ENCODE measurements at regions of chr1 and their contacts with region 1.

Region 1: DNA sequence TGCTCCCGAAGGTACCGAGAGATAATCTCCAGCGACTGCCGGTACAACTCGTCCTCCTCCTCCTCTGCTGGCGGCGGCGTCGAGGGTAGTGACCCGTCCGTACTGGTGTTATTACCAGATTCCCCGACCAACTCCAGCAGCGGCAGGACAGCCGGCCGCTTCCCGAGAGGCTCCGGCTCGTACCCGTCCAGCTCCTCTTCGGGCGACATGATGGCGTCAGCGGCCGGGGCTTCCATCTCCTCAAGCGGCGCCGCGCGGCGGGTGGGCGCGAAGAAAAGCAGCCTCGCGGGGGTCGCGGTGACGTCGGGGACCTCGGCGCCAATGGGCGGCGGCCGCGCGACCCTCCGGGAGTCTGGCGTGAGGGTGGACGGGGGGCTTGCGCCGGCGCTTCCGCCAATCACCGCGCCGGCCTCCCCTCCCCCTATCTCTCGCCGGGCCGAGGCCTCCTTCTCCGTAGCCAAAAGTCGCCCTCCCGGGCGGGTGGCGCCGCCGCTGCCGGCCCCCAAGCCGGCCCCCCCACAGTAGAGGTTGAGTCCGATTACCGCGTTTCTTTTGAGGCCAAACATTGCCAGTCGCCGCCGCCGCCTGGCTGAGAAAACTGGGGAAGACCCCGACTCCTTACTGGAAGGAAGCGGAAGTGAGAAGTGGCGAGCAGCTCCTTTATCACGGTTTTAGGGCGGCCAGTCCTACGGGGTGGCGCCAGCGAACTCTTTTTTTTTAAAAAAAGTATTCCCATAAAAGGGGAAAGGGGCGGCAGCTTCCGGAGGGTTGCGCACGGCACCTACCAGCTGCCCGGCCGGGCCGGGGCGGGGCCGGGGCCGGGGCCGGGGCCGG is at the start of gene MCL1:
- DNase-seq: peak; percentile 95
- H3K4me3 Mint-ChIP-seq: peak within 1 kb of the TSS; percentile 90
- H3K27ac Mint-ChIP-seq: peak within 1 kb of the TSS; percentile 99
- H3K4me1 Mint-ChIP-seq: peaks cover 19% of the 10 kb centered on the region
- H3K27me3 Mint-ChIP-seq: no peaks in the 10 kb centered on the region
- total RNA-seq, gene MCL1: 228 to 235 TPM

Region 2: DNA sequence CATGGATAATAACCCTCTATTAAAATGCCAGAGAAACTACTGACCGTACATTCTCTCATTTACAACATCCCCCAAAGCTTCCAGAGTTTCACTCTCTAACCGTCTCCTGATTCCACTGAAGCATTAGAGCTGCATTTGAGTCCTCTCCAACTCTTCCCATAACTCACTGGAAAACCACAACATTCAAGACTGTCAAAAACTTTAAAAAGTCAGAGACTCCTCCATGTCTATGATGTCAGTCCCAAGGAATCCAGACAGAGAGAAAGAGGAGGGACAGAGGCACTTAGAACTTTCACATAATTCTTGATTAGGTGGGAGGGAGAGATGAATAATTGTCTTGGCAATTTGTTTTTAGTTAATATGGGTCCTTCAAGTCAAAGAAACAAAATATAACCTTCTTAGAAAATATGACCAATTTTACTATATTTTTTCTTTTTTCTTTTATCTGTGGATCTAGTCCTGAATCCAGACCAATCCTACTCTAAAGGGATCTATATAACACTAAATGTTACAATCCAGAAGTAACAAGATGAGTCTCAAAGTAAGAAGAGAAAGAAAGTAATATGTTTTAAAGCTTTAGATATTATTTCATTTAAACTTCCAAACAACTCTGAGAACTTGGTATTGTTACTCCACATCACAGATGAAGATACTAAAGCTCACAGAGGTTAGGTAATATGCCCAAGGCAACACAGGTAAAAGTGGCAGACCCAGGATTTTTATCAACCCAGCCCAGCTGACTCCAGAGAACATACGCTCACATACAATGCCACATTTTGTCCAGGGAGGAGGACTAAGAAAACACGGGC is 592.5 kb before region 1 on chr1:
- CTCF ChIA-PET with region 1: no interaction called
- intact Hi-C with region 1: no loop called
- DNase-seq: no peak
- H3K4me3 Mint-ChIP-seq: no peak overlapping the region
- H3K27ac Mint-ChIP-seq: no peak overlapping the region
- H3K4me1 Mint-ChIP-seq: peaks cover 8% of the 10 kb centered on the region
- H3K27me3 Mint-ChIP-seq: no peaks in the 10 kb centered on the region

Region 3: GRCh38 chr1:150477733-150478132 is 101.4 kb before region 1 on chr1:
- CTCF ChIA-PET with region 1: no interaction called
- intact Hi-C with region 1: no loop called
- DNase-seq: no peak
- H3K4me3 Mint-ChIP-seq: no peak overlapping the region
- H3K27ac Mint-ChIP-seq: no peak overlapping the region
- H3K4me1 Mint-ChIP-seq: peaks cover 7% of the 10 kb centered on the region
- H3K27me3 Mint-ChIP-seq: no peaks in the 10 kb centered on the region

Region 4: GRCh38 chr1:150567717-150568593 is 11.2 kb before region 1 on chr1:
- CTCF ChIA-PET with region 1: interaction called, 156 read pairs
- intact Hi-C with region 1: loop called (anchors 1 kb)
- DNase-seq: peak; percentile 67
- H3K4me3 Mint-ChIP-seq: peak overlapping the region; percentile 71
- H3K27ac Mint-ChIP-seq: peak overlapping the region; percentile 99
- H3K4me1 Mint-ChIP-seq: peaks cover 94% of the 10 kb centered on the region
- H3K27me3 Mint-ChIP-seq: no peaks in the 10 kb centered on the region

Region 5: GRCh38 chr1:150606463-150607148 is 27.4 kb after region 1 on chr1:
- CTCF ChIA-PET with region 1: interaction called, 3 read pairs
- intact Hi-C with region 1: loop called (anchors 1 kb)
- DNase-seq: no peak
- H3K4me3 Mint-ChIP-seq: no peak overlapping the region
- H3K27ac Mint-ChIP-seq: no peak overlapping the region
- H3K4me1 Mint-ChIP-seq: peaks cover 35% of the 10 kb centered on the region
- H3K27me3 Mint-ChIP-seq: no peaks in the 10 kb centered on the region